Heart right ventricle (tissue), 16 donors: ENCODE measurements at regions of chr3 and their contacts with region 1.

Region 1: DNA sequence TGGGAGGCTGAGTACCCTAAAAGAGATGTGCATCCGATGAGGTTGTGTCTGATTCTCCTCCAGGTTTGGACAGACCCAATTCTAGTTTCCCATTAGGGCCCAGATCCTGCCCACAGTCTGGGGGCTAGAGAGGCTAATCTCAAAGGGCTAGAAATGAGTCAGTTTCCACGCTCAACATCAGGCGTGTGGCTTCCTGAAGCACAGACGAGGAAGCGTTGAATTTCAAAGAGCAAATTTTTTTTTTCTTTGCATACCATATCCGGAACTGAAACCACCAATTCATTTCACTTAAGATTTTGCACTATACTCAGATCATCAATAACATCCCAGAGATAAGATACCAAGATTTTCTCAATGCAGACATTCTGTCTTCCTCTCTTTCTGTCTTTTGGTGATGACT is 173.8 kb upstream of the BCL6 start:
- DNase-seq: no peak
- ATAC-seq: no peak
- H3K4me3 ChIP-seq: no peak overlapping the region
- H3K27ac ChIP-seq: peak overlapping the region in 1 of 10 donors; percentile 83
- H3K4me1 ChIP-seq: peaks cover 0 to 75% (median 7%) of the 10 kb centered on the region in 9 donors
- H3K27me3 ChIP-seq: no peaks in the 10 kb centered on the region
- CTCF ChIP-seq: no peak

Region 2: DNA sequence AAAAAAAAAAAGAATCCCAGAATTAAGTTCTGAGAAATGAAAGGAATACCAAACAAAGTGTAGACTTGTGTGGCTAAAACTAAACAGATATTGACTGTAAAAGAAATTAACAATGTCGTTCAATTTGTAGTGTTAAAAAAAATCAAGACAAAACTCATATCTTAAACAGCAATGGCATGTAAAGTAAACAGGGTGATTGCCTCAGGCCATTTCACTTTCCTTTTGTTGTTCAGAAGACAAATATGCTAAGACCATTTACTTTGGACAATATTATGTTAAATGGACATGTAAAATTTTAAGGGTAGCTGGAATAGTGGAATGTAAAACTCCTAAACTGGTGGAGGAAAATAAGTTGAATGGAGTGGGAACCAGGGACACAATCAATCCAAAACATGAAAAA is 411.8 kb before region 1 on chr3:
- intact Hi-C with region 1: no loop called
- DNase-seq: no peak
- ATAC-seq: no peak
- H3K4me3 ChIP-seq: no peak overlapping the region
- H3K27ac ChIP-seq: no peak overlapping the region
- H3K4me1 ChIP-seq: no peaks in the 10 kb centered on the region
- H3K27me3 ChIP-seq: no peaks in the 10 kb centered on the region
- CTCF ChIP-seq: no peak

Region 3: GRCh38 chr3:187777331-187777941 is 141.6 kb before region 1 on chr3:
- intact Hi-C with region 1: loop called in 2 of 10 experiments (anchors 10 kb)
- DNase-seq: no peak
- ATAC-seq: peak in 5 of 8 donors; percentile 45 to 75 (median 57)
- H3K4me3 ChIP-seq: no peak overlapping the region
- H3K27ac ChIP-seq: peak overlapping the region in 2 of 10 donors; percentile 14 to 88
- H3K4me1 ChIP-seq: peaks cover 0 to 67% (median 10%) of the 10 kb centered on the region in 9 donors
- H3K27me3 ChIP-seq: no peaks in the 10 kb centered on the region
- CTCF ChIP-seq: no peak

Region 4: DNA sequence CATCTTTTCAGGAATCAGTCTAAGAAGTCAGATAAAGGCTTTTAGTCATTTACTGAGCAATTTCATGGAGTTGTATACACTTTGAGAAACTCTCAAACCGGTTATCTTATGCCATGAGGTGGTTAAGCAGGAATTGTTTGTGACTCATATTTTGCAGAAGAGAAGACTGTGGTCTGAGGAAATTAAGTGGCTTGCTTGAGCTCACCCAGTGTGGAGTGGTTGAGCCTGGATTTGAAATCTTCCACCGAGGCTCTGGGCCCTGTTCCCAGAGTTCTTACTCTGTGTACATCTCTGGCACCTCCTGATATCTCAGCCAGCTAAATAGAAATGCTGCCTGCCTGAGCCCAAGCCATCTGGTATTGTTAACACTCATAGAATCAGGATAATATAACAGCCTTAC is 135.9 kb before region 1 on chr3:
- intact Hi-C with region 1: loop called in 2 of 10 experiments (anchors 10 kb)
- DNase-seq: peak; percentile 28 to 50
- ATAC-seq: peak; percentile 65 to 98 (median 93)
- H3K4me3 ChIP-seq: no peak overlapping the region
- H3K27ac ChIP-seq: peak overlapping the region in 7 of 10 donors; percentile 4 to 57 (median 46)
- H3K4me1 ChIP-seq: peaks cover 0 to 16% (median 0%) of the 10 kb centered on the region in 9 donors
- H3K27me3 ChIP-seq: no peaks in the 10 kb centered on the region
- CTCF ChIP-seq: no peak

Region 5: GRCh38 chr3:188179006-188179966 is 260.2 kb after region 1 on chr3:
- intact Hi-C with region 1: no loop called
- DNase-seq: peak in 1 of 2 donors; percentile 59
- ATAC-seq: peak; percentile 49 to 86 (median 74)
- H3K4me3 ChIP-seq: no peak overlapping the region
- H3K27ac ChIP-seq: peak overlapping the region; percentile 70 to 87 (median 80)
- H3K4me1 ChIP-seq: peaks cover 9 to 92% (median 43%) of the 10 kb centered on the region in 9 donors
- H3K27me3 ChIP-seq: no peaks in the 10 kb centered on the region
- CTCF ChIP-seq: peak in 2 of 9 donors; percentile 36